ENCODE measurements at regions of chr15 and their contacts with region 1.

Region 1: GRCh38 chr15:63466378-63467192 is 37.8 kb upstream of the USP3 start:
- DNase-seq: peak; percentile 44
- H3K4me3 Mint-ChIP-seq: no peak overlapping the region
- H3K27ac Mint-ChIP-seq: no peak overlapping the region
- H3K4me1 Mint-ChIP-seq: peaks cover 20% of the 10 kb centered on the region
- H3K27me3 Mint-ChIP-seq: peaks cover 7% of the 10 kb centered on the region

Region 2: DNA sequence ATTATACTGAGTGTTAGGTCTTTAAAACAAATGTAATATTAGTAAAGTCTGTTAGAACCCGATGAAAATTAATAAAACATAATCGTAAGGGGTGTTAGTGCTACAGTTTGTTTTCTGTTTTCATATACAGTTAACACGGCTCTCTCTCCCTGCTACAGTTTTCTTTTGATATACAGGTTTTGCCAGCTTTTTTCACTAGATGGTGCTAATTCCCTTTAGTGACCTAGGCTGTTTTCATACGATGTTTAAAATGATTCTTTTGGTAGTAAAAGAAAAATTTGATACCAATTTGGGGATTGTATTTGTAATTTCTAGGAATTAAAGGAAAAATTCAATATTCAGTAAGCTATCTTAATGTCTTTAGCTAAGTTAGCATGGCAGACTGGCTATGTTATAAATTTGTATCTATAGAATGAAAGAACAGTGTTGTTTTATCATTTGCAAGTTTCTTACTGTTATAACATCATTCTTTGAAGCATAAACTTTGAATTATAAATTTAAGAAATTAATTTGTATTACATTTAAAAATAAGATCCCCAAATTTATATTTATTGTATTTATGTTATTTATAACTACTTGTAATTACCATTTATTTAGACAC is 177.7 kb before region 1 on chr15:
- intact Hi-C with region 1: loop called (anchors 2 kb)
- DNase-seq: no peak
- H3K4me3 Mint-ChIP-seq: no peak overlapping the region
- H3K27ac Mint-ChIP-seq: no peak overlapping the region
- H3K4me1 Mint-ChIP-seq: peaks cover 8% of the 10 kb centered on the region
- H3K27me3 Mint-ChIP-seq: peaks cover 3% of the 10 kb centered on the region

Region 3: DNA sequence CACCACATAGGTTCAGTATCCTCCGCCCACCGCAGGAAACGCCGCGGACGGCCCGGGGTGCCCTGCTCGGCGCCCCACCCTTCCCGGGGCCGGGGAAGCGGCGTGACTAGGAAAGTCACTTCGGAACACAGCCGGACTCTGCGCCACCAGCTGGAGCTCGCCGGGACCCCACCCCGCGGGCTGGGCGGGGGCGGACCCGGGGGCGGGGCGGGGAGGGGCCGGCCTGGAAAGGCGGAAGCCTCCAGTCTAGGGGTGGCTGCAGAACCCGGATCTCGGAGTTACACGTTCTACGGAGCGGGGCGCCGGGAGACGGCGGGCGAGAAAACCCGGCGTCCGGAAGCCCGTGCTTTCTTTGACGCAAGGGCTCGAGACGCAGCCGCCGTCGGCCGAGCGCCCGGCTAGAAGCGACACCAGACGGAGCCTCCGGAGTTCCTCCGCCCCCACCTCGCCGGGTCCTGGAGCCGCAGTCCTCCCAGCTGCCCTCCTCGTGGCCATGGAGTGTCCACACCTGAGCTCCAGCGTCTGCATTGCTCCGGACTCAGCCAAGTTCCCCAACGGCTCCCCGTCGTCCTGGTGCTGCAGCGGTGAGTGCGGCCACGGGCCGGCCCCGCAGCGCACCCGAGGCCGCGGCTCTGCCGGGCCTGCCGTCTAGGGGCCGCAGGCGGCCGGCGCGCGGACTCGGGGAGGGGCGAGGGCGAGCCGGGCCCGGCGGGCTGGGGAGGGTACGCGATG is 37.8 kb after region 1 on chr15 and contains the start of gene USP3:
- intact Hi-C with region 1: loop called (anchors 1 kb)
- DNase-seq: peak; percentile 91
- H3K4me3 Mint-ChIP-seq: peak within 1 kb of the TSS; percentile 93
- H3K27ac Mint-ChIP-seq: peak within 1 kb of the TSS; percentile 93
- H3K4me1 Mint-ChIP-seq: peaks cover 83% of the 10 kb centered on the region
- H3K27me3 Mint-ChIP-seq: no peaks in the 10 kb centered on the region
- total RNA-seq, gene USP3: 46.9 and 58.9 TPM in 2 replicates

Region 4: DNA sequence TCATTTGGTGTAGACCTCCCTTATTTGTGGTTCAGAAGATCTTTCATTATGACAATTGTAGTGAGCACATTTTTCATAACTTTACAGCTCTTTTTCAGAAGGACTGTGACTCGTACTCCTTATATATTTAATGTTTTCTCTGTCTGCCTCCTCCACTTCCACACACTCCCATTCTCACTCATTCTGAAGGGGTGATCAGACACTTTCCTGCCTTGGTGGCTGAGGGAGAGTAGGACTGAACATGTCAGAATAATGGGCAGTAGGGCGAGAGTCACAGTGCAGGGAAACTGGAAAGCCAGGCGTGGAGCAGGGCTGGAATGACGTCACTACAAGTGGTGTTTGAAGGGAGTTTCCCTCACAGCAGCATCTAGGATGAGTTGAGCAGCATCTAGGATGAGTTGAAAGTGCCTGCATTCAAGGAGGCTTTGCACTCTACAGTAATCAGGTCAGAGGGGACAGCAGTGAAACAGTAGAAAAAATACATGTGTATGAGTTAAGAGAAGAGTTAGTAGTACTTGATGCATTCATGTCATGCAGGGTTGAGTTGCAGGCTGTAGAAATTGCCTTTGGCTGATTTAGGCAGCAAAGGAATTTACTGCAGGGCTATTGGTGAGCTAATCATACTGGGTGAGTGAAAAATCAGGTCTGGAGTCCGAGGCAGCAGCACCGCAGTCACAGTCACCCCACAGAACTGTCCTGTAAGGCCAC is 94.3 kb after region 1 on chr15:
- intact Hi-C with region 1: loop called (anchors 5 kb)
- DNase-seq: peak; percentile 4
- H3K4me3 Mint-ChIP-seq: no peak overlapping the region
- H3K27ac Mint-ChIP-seq: peak overlapping the region; percentile 30
- H3K4me1 Mint-ChIP-seq: peaks cover 18% of the 10 kb centered on the region
- H3K27me3 Mint-ChIP-seq: no peaks in the 10 kb centered on the region

Region 5: DNA sequence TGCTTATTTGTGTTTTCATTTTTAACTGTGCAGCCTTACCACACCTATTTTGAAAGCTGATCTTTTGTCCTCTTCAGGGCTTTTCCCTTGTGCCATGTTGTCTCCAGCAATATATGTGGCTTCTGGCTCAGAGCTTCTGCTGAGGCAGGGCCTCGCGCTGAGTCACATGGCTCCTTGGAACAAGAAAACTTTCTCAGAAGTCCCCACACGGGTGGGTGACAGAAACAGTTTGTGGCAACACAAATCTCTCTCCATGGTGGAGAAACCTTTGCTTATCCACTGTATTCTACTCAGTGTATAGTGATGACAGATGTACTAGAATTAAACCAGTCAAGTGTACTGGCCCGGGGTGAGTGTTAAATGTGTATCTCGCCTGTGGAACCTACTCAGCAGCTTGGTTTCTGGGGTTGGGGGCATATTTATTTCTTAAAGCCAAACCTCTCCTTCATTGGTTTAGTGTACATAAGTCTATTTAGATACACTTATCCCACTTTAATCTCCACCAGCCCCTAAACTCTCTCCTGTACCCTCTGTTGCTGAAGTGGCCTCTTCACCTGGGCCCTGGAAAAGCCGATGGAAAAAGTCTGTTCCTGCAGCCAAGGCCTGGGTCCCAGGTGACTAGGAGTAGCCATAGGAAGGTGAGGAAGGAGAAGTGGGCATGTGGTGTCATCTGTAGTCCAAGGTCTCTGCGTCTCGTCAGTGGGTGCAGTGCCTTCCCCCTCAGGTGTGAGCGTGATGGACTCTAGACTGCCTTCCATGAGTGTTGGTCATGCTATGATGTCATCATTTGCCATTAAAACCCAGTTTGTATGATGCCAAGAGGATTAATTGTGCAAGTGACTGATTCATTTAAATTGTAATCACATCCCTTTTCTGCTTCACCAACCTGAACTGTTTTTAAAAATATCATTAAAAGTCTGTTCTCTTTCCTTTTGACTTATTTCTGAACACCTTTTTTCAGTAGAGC is 127.4 kb after region 1 on chr15:
- intact Hi-C with region 1: no loop called
- DNase-seq: no peak
- H3K4me3 Mint-ChIP-seq: no peak overlapping the region
- H3K27ac Mint-ChIP-seq: peak overlapping the region; percentile 67
- H3K4me1 Mint-ChIP-seq: peaks cover 47% of the 10 kb centered on the region
- H3K27me3 Mint-ChIP-seq: no peaks in the 10 kb centered on the region

Region 6: DNA sequence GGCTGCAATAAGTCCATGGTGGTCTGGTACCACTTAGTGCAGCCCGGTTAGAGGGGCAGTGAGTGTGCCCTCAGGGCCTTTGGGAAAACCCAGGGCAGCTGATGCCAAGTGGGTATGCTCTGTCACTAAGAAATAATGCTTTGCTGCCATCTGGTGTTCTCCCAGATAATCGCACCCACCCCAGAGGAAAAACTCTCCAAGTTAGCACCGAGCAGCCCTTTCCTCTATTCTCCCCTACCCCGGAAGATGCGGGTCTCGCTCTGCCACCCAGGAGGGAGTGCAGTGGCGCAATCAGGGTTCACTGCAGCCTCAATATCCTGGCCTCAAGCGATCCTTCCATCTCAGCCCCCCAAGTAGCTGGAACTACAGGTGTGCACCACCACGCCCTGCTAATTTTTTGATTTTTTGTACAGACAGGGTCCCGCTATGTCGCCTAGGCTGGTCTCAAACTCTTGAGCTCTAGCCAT is 601.0 kb after region 1 on chr15:
- intact Hi-C with region 1: loop called (anchors 2 kb)
- DNase-seq: peak; percentile 63
- H3K4me3 Mint-ChIP-seq: no peak overlapping the region
- H3K27ac Mint-ChIP-seq: no peak overlapping the region
- H3K4me1 Mint-ChIP-seq: peaks cover 10% of the 10 kb centered on the region
- H3K27me3 Mint-ChIP-seq: no peaks in the 10 kb centered on the region

Region 7: DNA sequence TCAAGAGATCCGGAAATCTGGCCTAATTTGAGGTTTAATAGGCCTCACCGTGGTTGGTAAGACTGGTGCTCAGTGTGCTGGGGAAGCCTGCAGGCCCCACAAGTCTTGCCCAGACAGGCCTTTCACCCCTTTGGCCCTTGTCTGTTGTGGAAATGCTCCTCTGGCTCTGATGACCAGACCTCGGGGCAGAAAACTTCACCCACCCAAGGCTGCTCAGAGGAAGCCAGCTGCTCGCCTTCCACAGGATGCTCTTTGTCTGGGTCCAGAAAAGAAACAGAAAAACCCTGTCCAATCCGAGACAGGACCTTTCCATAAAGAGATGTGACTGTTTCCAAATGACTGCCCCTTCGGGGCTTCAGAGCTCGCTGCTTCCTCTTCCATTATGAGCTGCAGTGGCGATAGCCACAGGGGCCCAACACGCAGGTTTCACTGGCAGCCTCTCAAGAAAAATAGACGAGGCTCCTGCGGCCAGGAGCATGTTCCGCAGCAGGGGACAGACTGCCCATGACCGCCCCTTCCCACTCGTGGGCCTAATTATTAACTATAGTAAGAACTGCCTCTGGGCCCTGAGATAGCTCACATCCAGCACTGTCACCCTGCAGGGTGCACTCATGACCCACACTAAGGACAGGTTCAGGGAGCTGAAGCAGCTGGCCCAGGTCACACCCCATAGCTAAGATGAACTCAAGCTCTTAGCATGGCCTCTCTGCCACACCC is 678.1 kb after region 1 on chr15:
- intact Hi-C with region 1: no loop called
- DNase-seq: no peak
- H3K4me3 Mint-ChIP-seq: no peak overlapping the region
- H3K27ac Mint-ChIP-seq: no peak overlapping the region
- H3K4me1 Mint-ChIP-seq: peaks cover 5% of the 10 kb centered on the region
- H3K27me3 Mint-ChIP-seq: no peaks in the 10 kb centered on the region